T-cell (primary cell): ENCODE measurements at regions of chr16 and their contacts with region 1.

Region 1: DNA sequence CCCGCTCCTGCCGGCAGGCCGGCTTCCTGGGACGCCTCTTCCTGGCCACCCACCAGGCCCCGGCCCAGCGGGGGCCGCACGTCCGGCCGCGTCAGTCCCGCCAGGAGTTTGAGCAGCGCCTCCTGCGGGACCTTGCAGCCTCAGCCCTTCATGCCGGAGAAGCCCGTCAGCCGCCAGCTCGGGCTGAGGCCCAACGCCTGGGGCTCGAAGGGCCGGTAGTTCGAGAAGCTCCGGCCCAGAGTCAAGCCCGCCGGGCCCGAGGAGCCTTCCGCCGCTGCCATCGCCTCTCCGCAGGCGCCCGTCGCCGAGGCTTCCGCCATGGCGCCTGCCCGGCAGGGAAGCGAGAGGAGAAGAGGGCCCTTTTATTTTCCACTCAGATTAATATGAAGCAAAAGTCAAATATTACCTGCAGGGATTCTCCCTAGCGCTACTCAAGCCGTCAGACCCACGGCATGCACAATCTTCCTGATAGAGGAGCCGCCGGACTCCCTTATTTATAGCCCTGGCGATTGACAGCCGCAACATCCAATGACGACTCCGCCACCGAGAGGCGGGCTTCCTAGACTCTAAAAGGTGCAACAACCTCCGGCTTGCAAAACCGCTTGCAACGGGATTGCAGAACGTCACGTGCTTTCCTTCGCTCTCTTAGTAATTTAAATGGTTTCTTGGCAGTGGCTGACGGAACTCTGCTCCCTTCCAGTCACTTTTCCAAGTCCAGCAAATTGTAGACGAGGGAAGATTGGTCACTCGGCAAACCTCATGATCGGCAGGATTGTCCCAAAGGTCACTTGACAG is at the start of gene SEPHS2:
- DNase-seq: peak; percentile 88 to 99 (median 96)
- ATAC-seq: peak; percentile 96 to 97 (median 96)
- H3K4me3 ChIP-seq: peak within 1 kb of the TSS; percentile 81 to 94
- H3K4me3 Mint-ChIP-seq: peak within 1 kb of the TSS; percentile 85 to 95 (median 90)
- H3K27ac ChIP-seq: peak within 1 kb of the TSS; percentile 71
- H3K27ac Mint-ChIP-seq: peak within 1 kb of the TSS; percentile 93 to 96
- H3K4me1 ChIP-seq: peaks cover 22 to 49% of the 10 kb centered on the region in 2 experiments
- H3K4me1 Mint-ChIP-seq: peaks cover 38 to 50% (median 46%) of the 10 kb centered on the region in 3 donors
- H3K27me3 ChIP-seq: no peaks in the 10 kb centered on the region
- H3K27me3 Mint-ChIP-seq: no peaks in the 10 kb centered on the region
- total RNA-seq, gene SEPHS2: 21.3 to 50.2 (median 47.8) TPM

Region 2: DNA sequence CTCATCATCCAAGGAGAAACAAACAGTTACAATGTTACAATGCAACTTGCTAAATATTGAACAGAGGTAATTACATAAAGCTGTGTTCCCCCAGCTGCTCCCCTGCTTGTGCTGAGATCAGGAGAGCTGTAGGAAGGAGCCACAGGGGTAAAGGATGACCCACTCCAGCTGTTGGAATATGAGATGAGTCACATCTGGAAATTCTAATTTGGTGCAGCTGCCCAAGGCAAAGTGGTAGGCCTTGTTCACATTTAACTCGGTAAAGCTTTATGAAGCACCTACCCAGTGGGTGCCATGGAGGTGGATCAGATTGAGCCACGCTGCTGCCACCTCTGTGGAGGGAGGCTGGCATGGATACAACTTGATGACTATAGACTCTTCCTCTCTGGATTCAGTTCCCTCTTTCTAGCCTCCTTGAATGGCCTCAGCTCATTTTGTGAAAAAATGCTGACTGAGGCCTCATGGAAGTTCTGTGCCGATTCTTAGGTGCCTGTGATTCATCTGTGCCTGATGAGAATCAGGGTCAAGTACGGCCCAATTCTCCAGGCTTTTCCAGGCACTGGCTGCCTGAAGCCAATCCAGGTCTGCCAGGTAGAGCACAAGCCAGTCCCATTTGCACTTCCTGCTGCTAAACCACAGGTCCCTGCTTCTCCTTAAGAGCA is 157.1 kb after region 1 on chr16:
- CTCF ChIA-PET with region 1: interaction called, 3 to 14 read pairs
- POLR2A ChIA-PET with region 1: interaction called in 1 of 2 experiments, 3 read pairs
- DNase-seq: no peak
- ATAC-seq: no peak
- H3K4me3 ChIP-seq: no peak overlapping the region
- H3K4me3 Mint-ChIP-seq: no peak overlapping the region
- H3K27ac ChIP-seq: no peak overlapping the region
- H3K27ac Mint-ChIP-seq: no peak overlapping the region
- H3K4me1 ChIP-seq: peaks cover 0 to 3% of the 10 kb centered on the region in 2 experiments
- H3K4me1 Mint-ChIP-seq: peaks cover 3 to 12% (median 12%) of the 10 kb centered on the region in 3 donors
- H3K27me3 ChIP-seq: no peaks in the 10 kb centered on the region
- H3K27me3 Mint-ChIP-seq: no peaks in the 10 kb centered on the region